Posterior vena cava (tissue), 2 donors: ENCODE measurements at regions of chr9 and their contacts with region 1.

Region 1: GRCh38 chr9:33225319-33226149 is 14.4 kb upstream of the SPINK4 start:
- DNase-seq: no peak

Region 2: DNA sequence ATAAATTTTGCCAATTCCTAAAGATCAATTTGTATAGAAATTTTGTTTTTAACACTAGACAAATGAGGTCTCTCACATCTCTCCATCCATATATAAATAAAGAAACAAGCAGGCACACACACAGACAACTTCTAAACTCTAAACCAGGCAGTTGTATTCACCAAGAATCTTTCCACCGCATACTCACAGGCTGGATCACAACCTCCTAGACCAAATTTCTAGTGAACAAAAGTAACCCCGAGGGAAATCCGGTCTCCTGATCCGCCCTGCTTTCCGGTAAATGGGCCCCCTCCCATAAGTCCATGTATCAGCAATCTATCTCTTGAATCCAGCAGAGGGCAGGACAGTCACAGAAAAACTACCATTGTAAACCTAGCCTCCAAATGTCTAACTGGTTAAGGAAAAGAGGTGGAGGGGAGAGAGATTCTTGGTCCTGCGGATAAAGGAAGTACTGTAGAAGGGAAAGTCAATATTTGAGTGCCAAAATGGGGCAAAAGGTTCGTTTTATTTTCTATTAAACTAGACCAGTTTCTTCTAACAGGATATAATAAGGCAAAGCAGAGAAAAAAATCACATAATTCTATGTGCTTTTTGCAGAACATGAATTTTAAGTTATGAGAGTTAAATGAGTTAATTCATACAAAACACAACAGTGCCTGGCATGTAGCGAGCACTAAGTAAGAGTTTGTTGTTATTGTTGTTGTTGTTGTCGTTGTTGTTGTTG is 144.2 kb before region 1 on chr9:
- intact Hi-C with region 1: loop called (anchors 2 kb)
- DNase-seq: no peak

Region 3: GRCh38 chr9:33159760-33160127 is 65.8 kb before region 1 on chr9:
- intact Hi-C with region 1: loop called in 1 of 2 experiments (anchors 2 kb)
- DNase-seq: peak; percentile 92